Ovary (tissue), 10 donors: ENCODE measurements at regions of chr15 and their contacts with region 1.

Region 1: DNA sequence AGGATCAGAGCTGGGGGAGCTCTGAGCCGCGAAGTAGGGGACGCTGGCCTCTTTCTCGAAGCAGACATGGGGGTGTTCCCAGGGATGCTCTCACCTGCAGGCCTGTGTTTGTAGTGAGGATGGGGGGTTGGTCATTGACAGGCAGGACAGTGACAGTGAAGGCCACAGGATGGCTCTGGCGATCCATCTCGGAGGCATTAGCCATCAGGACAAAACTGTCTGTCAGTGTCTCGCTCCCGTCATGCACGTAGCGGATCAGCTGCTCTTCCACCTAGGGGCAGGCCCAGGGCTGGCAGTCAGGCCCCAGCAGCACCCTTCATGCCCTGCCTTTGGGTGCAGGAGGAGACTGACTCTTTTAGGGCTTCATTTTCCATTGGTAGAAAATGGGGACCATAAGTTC is 28.0 kb downstream of the CSPG4 start:
- DNase-seq: no peak
- H3K4me3 ChIP-seq: no peak overlapping the region
- H3K27ac ChIP-seq: no peak overlapping the region
- H3K4me1 ChIP-seq: peaks cover 4% of the 10 kb centered on the region
- H3K27me3 ChIP-seq: no peaks in the 10 kb centered on the region
- CTCF ChIP-seq: no peak
- EP300 ChIP-seq: no peak
- POLR2A ChIP-seq: no peak

Region 2: GRCh38 chr15:75508840-75509532 is 175.7 kb before region 1 on chr15:
- intact Hi-C with region 1: loop called in 2 of 4 experiments (anchors 5 to 10 kb)
- DNase-seq: no peak
- H3K4me3 ChIP-seq: no peak overlapping the region
- H3K27ac ChIP-seq: no peak overlapping the region
- H3K4me1 ChIP-seq: no peaks in the 10 kb centered on the region
- H3K27me3 ChIP-seq: no peaks in the 10 kb centered on the region
- CTCF ChIP-seq: peak; percentile 17 to 43 (median 19)
- EP300 ChIP-seq: no peak
- POLR2A ChIP-seq: no peak

Region 3: DNA sequence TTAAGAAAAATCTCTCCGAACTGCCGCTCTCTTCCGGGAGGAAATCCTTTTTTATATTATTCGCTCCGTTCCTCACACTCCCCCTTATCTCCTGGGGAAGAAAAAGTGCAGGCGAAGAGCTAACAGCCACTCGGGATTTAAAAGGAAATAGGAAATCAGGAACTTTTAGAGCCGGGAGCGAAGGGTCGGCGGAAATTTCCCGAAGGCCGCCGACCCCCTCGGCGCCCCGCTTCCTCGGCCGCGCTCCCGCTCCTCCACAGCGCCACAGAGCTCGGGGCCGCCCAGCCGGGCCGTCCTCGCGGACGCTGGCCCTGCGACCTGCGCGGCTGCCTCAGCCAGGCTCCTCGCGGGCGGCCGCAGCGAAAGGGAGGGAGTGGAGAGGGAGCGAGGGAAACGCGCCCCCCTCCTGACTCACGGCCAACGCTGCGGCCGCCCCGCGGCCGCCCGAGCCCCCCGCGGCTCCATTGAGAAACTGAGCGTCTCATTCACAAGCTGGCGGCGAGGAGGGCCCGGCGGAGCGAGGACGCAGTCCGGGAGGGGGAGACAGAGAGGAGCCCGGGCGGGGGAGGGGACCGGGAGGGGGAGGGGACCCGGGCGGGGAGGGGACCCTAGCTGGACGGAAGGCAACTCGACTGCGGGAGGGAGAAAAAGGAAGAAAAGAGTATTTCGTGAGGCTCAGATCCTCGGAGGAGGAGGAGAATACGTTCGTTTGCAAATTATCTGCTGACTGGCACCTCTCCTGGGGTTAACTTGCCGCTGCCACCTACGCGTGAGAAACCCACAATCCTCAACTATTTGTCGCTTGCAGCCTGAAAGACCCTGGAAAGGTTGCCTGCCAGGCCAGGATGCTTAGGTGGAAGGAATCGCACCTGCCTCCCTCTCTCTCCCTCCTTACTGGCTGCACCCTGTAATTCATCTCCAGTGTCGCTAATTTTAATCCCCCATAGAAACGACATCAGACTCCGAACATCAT is 105.4 kb before region 1 on chr15 and contains the start of gene PTPN9:
- intact Hi-C with region 1: no loop called
- DNase-seq: peak; percentile 80 to 85 (median 82)
- H3K4me3 ChIP-seq: peak within 1 kb of the TSS; percentile 70
- H3K27ac ChIP-seq: peak within 1 kb of the TSS; percentile 56 to 80
- H3K4me1 ChIP-seq: no peaks in the 10 kb centered on the region
- H3K27me3 ChIP-seq: no peaks in the 10 kb centered on the region
- CTCF ChIP-seq: no peak
- EP300 ChIP-seq: no peak
- POLR2A ChIP-seq: peak; percentile 30
- total RNA-seq, gene PTPN9: 12.2 to 32.4 (median 21.8) TPM

Region 4: DNA sequence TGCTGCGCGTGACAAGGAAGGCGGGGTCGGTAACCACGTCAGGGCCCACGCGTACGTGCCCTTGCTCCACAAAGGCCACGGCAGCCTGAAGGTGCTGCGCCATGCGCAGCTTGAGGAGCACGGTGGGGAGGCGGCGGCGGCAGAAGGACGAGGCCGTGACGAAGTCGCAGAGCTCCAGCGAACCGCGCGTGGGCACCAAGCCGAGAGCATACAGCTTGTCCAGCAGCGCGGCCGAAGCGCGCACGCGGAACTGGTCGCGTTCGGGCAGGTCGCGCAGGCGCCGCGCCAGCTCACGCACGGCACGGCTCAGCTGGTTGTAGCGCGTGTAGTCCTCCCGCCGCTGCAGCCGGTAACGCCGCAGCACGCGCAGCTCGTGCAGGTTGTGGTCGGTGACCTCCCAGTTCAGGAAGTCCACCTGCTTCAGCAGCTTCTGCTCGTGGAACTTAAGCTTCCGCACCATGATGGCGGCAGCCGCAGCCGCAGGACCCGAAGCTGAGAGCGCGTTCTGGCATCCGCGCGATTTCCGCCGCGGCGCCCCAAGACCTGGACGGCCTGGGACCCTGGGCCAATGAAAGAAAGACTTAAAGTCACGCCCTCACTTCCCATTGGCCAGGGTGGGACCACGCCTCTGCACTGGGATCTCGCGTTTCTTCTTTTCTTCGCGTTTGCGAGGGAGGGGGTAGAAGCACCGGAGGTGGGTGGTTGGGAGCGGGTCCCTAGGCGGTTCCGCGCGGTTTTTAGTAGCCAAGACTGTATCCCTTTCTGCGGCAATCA is 44.7 kb before region 1 on chr15 and contains the start of gene IMP3:
- intact Hi-C with region 1: loop called in 3 of 4 experiments (anchors 5 to 10 kb)
- DNase-seq: peak; percentile 91 to 95 (median 92)
- H3K4me3 ChIP-seq: peak within 1 kb of the TSS; percentile 95
- H3K27ac ChIP-seq: peak within 1 kb of the TSS in 1 of 2 donors; percentile 82
- H3K4me1 ChIP-seq: peaks cover 4% of the 10 kb centered on the region
- H3K27me3 ChIP-seq: no peaks in the 10 kb centered on the region
- CTCF ChIP-seq: no peak
- EP300 ChIP-seq: no peak
- POLR2A ChIP-seq: peak; percentile 87
- total RNA-seq, gene IMP3: 45.1 to 106 (median 59.6) TPM

Region 5: DNA sequence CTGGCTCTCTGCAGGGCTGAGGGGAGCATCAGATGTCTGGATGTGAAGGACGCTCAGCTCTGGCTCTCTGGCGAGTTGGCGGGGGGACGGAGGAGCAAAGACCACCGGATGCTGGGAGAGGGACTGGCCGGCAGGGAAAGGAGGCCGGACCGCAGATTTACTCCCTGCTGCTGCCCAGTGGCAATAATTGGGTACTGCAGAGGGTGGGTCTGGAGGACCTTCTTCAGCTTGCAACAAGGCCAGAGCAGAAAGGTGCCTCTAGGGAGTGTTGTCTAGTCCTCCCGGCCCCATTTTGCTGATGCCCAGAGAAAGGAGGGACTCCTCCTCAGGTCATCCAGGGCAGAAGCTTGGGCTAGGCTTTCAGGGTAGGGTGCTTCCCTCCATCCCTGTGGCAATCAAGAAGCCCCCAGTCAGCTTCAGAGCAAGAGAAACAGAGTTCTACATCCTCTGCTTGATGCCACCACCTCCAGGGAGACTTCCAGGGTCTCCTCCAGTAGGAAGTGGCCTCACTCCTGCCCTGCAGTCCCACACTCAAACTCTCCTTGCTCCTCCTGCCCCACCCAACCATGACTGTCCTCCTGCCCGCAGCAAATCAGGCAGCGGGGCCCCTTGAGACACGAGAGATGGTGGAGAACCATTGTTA is 48.3 kb after region 1 on chr15:
- intact Hi-C with region 1: loop called in 3 of 4 experiments (anchors 5 to 10 kb)
- DNase-seq: peak; percentile 65 to 83 (median 82)
- H3K4me3 ChIP-seq: no peak overlapping the region
- H3K27ac ChIP-seq: no peak overlapping the region
- H3K4me1 ChIP-seq: peaks cover 10% of the 10 kb centered on the region
- H3K27me3 ChIP-seq: no peaks in the 10 kb centered on the region
- CTCF ChIP-seq: peak; percentile 70 to 87 (median 80)
- EP300 ChIP-seq: no peak
- POLR2A ChIP-seq: no peak

Region 6: GRCh38 chr15:75750261-75751050 is 65.8 kb after region 1 on chr15:
- intact Hi-C with region 1: no loop called
- DNase-seq: peak in 1 of 5 donors; percentile 6
- H3K4me3 ChIP-seq: no peak overlapping the region
- H3K27ac ChIP-seq: no peak overlapping the region
- H3K4me1 ChIP-seq: no peaks in the 10 kb centered on the region
- H3K27me3 ChIP-seq: no peaks in the 10 kb centered on the region
- CTCF ChIP-seq: no peak
- EP300 ChIP-seq: no peak
- POLR2A ChIP-seq: no peak

Region 7: DNA sequence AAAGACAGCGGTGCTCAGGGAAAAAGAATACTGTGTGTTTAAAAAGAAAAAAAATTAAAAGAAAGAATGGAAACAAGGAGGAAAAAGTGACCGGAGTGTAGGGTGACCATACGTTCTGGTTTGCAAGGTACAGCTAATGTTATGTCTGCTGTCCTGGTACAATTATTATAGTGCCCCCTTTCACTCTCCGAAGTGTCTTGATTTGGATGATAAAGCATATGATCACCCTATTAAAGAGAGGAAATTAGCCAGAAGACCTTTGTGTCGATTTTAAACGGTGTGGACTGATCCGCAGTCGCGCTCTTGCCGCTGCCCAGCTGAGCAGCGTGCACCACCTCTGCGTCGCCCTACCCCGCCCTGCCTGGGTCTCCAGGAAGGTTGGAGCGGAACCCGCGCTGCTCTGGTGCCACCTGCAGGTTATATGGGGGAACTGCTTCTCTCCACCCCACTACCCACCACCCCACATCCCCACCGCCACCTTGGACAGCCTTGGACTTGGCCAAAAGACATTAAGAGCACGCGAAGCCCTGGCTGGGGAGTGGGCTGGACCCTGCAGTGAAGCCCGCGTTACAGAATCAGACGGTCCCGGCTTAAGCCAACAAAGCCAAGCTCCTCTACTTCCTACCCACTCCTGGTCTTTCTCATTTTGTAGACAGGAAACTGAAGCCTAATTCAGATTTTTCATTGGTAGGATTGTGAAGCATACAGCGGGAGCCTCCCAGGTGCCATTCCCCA is 117.4 kb after region 1 on chr15:
- intact Hi-C with region 1: loop called in 1 of 4 experiments (anchors 10 kb)
- DNase-seq: peak; percentile 75 to 85 (median 81)
- H3K4me3 ChIP-seq: no peak overlapping the region
- H3K27ac ChIP-seq: no peak overlapping the region
- H3K4me1 ChIP-seq: no peaks in the 10 kb centered on the region
- H3K27me3 ChIP-seq: no peaks in the 10 kb centered on the region
- CTCF ChIP-seq: peak; percentile 63 to 73 (median 69)
- EP300 ChIP-seq: no peak
- POLR2A ChIP-seq: no peak